ENCODE measurements at regions of chr16 and their contacts with region 1.

Region 1: GRCh38 chr16:69013991-69014390 is 91.5 kb upstream of the HAS3 start:
- DNase-seq: no peak
- H3K4me3 ChIP-seq: no peak overlapping the region
- H3K27ac ChIP-seq: no peak overlapping the region
- H3K4me1 ChIP-seq: peaks cover 17% of the 10 kb centered on the region
- H3K27me3 ChIP-seq: no peaks in the 10 kb centered on the region
- CTCF ChIP-seq: no peak

Region 2: GRCh38 chr16:68612996-68613395 is 401.0 kb before region 1 on chr16:
- CTCF ChIA-PET with region 1: interaction called, 14 read pairs
- POLR2A ChIA-PET with region 1: no interaction called
- intact Hi-C with region 1: no loop called
- DNase-seq: no peak
- H3K4me3 ChIP-seq: no peak overlapping the region
- H3K27ac ChIP-seq: no peak overlapping the region
- H3K4me1 ChIP-seq: no peaks in the 10 kb centered on the region
- H3K27me3 ChIP-seq: no peaks in the 10 kb centered on the region; the same call in 1 of the 2 replicates
- CTCF ChIP-seq: no peak

Region 3: GRCh38 chr16:68961778-68962402 is 52.1 kb before region 1 on chr16:
- CTCF ChIA-PET with region 1: no interaction called
- POLR2A ChIA-PET with region 1: no interaction called
- intact Hi-C with region 1: no loop called
- DNase-seq: no peak
- H3K4me3 ChIP-seq: no peak overlapping the region
- H3K27ac ChIP-seq: no peak overlapping the region
- H3K4me1 ChIP-seq: peaks cover 5% of the 10 kb centered on the region; the same call in 1 of the 2 replicates
- H3K27me3 ChIP-seq: no peaks in the 10 kb centered on the region
- CTCF ChIP-seq: no peak

Region 4: DNA sequence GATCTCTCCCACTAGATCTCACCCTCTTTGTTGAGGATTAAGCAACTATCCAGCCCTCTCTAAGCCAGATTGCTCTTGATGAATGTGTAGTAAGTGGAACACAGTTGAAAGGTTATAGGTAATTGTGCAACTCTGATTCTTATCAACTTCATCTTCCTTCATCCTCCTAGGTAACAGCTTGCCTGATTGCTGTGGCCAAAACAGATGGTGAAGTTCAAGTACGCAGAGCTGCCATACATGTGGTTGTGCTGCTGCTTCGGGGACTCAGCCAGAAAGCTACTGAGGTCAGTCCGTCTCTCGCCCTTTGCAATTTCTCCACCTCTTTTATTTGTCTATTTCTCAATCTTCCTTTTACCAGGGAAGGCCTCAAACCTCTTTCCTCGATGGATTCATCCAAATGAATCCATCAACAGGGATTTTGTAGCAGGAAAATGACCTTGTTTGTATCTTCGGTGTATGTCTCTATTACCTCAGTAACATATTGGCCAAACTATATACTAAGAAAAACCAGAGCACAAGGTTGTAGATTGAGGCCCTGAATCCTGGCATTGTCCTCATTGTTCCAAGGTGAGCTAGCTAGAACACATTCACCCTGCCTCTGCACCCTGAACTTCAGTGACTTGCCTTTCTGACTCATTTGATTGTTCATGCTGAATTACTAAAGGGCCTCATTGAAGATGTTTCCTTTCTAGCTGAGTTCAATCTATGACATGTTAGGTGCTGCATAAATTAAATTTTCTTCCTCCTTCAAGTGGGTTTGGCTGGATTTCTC is 26.3 kb after region 1 on chr16:
- CTCF ChIA-PET with region 1: no interaction called
- POLR2A ChIA-PET with region 1: interaction called, 31 read pairs
- intact Hi-C with region 1: no loop called
- DNase-seq: peak in 1 of 2 experiments; percentile 76
- H3K4me3 ChIP-seq: no peak overlapping the region
- H3K27ac ChIP-seq: peak overlapping the region; percentile 60
- H3K4me1 ChIP-seq: peaks cover 38% of the 10 kb centered on the region
- H3K27me3 ChIP-seq: no peaks in the 10 kb centered on the region
- CTCF ChIP-seq: no peak